AG04449 (cell line): ENCODE measurements at regions of chr9 and their contacts with region 1.

Region 1: GRCh38 chr9:120985810-120986222 is 59.2 kb upstream of the TRAF1 start:
- DNase-seq: peak; percentile 66
- H3K4me3 ChIP-seq: no peak overlapping the region
- CTCF ChIP-seq: peak; percentile 59

Region 2: DNA sequence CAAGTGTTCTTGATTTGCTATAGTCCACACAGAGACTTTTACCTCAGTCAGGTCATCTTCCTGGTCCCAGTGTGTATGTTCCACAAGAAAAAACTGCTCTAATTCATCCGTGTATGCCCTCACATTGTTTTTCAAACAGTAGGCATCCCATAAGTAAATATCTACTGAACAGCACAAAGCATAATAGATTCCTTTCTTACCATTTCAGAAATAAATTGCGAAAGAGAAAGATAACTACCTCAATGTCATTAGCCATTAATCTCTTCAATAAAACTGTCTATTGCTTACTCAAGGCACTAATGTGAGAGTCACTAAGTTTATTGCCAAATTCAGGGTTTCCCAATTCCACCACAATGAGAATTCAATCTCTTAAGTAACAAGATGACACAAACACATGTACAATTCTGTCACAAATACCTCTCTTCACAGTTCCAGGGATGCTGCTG is 202.2 kb before region 1 on chr9:
- CTCF ChIA-PET with region 1: no interaction called
- POLR2A ChIA-PET with region 1: no interaction called
- DNase-seq: peak; percentile 51
- H3K4me3 ChIP-seq: no peak overlapping the region
- CTCF ChIP-seq: no peak

Region 3: DNA sequence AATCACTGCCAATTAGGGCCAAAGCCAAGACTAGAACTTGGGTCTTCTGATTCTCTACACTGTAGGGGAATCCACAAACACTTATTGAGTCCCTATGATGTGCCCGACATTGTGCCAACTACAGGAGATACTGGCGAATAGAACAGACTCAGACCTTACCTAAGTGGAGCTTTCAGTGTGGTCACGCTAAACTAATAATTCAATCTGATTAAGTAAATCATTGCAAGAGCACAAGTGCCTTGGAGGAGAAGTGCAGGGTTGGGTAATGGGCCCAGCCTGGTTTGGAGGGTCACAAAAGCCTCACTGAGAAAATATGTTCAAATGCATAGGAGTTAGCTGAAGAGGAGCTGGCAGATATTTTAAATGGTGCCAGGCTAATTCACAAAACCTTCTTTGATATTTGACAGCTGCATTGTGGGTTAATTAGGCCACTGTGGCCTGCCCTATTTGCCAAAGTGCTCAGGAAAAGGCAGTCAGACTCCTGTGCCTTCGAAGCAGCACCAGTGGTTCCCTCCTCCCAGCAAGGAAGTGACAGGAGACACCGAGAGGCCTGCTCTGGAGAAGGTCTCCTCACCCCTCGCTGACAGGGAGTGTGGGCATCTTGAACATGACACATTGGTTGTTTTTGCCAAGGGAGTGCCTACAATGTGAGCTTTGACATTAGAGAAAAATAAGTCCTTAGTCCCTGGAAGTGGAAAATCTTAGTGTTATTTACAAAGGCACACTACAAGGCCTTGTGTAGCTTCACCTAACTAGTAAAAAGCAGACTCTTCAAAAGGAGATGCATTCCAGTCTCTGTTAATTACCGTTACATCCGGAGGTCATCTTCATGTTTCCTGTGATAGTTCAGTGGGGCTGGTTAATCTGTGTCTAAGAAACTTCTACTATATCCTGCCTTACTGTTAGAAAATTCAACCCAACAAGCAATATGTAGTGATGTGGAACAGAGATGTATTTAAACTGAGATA is 35.1 kb before region 1 on chr9:
- CTCF ChIA-PET with region 1: interaction called, 10 read pairs
- POLR2A ChIA-PET with region 1: no interaction called
- DNase-seq: no peak
- H3K4me3 ChIP-seq: no peak overlapping the region
- CTCF ChIP-seq: no peak

Region 4: GRCh38 chr9:120971938-120972337 is 13.9 kb before region 1 on chr9:
- CTCF ChIA-PET with region 1: interaction called, 19 read pairs
- POLR2A ChIA-PET with region 1: no interaction called
- DNase-seq: no peak
- H3K4me3 ChIP-seq: no peak overlapping the region
- CTCF ChIP-seq: no peak

Region 5: GRCh38 chr9:121048618-121049017 is 62.8 kb after region 1 on chr9:
- CTCF ChIA-PET with region 1: interaction called, 392 read pairs
- POLR2A ChIA-PET with region 1: no interaction called
- DNase-seq: peak; percentile 21
- H3K4me3 ChIP-seq: no peak overlapping the region
- CTCF ChIP-seq: no peak

Region 6: GRCh38 chr9:121121582-121122087 is 135.8 kb after region 1 on chr9:
- CTCF ChIA-PET with region 1: interaction called, 14 read pairs
- POLR2A ChIA-PET with region 1: no interaction called
- DNase-seq: peak; percentile 67
- H3K4me3 ChIP-seq: peak overlapping the region; percentile 62
- CTCF ChIP-seq: peak; percentile 17

Region 7: DNA sequence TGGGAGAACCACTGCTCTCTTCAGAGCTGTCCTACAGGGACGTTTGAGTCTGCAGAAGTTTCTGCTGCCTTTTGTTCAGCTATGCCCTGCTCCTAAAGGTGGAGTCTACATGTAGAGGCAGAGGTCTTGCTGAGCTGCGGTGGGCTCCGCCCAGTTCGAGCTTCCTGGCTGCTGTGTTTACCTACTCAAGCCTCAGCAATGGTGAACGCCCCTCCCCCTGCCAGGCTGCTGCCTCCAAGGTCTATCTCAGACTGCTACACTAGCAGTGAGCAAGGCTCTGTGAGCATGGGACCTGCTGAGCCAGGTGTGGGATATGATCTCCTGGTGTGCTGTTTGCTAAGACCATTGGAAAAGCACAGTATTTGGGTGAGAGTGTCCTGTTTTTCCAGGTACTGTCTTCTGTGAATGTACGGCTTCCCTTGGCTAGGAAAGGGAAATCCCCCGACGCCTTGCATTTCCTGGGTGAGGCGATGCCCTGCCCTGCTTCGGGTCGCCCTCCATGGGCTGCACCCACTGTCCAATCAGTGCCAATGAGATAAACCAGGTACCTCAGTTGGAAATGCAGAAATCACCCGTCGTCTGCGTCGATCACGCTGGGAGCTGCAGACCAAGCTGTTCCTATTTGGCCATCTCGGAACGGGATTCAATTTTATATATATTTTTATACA is 147.5 kb after region 1 on chr9:
- CTCF ChIA-PET with region 1: no interaction called
- POLR2A ChIA-PET with region 1: no interaction called
- DNase-seq: no peak
- H3K4me3 ChIP-seq: no peak overlapping the region
- CTCF ChIP-seq: no peak

Region 8: DNA sequence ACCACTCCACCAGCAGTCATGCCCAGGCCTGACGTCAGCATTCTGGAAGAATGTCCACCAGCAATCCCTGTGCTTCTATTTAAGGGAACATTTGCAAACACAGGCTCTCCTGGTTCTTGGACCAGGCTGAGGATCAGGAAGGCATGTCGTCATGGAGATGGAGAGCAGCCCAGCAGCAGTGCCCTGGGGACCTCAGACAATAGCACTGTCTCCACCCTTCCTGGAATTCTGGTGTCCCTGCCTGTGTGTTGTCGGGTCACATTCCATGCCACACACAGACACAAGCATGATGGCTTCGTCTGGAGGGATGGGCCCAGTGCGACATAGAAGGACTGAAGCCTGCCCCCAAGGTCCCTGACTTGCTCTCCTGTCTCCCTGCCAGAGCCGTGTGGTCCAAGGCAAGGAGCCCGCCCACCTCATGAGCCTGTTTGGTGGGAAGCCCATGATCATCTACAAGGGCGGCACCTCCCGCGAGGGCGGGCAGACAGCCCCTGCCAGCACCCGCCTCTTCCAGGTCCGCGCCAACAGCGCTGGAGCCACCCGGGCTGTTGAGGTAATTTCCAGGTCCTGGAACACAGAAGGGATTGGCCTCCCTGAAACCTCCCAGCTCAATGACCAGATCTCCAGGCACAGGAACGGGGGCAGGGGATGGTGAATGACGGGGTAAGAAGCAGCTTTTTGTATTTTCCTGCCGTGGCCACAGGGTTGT is 340.5 kb after region 1 on chr9:
- CTCF ChIA-PET with region 1: no interaction called
- POLR2A ChIA-PET with region 1: no interaction called
- DNase-seq: peak; percentile 63
- H3K4me3 ChIP-seq: no peak overlapping the region
- CTCF ChIP-seq: no peak